ENCODE measurements at regions of chr2 and their contacts with region 1.

Region 1: DNA sequence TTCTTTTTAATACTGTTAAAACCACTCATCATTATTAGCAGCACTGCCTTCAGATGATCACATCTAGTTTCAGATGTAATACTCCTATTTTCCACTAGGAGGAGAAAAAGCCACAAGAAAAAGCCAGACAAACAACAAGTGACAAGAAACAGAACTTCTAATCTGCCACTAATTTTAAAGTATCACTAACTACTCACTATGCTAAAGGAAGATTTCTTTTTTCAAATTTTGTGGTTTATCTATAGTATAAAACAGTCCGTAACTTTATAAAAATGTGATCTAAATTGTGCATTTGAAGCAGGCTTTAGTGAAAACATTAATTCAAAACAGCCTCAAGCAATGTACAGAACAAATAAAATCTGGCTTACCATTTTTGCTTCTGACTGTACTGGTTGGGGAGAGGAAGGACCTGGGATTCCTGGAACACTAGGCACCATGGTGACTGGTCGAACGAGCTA is 56.8 kb downstream of the ATF2 start:
- DNase-seq: peak in 1 of 2 experiments; percentile 49
- H3K4me3 ChIP-seq: no peak overlapping the region
- H3K4me3 Mint-ChIP-seq: no peak overlapping the region
- H3K27ac Mint-ChIP-seq: no peak overlapping the region
- H3K4me1 ChIP-seq: no peaks in the 10 kb centered on the region
- H3K4me1 Mint-ChIP-seq: no peaks in the 10 kb centered on the region
- H3K27me3 ChIP-seq: no peaks in the 10 kb centered on the region
- H3K27me3 Mint-ChIP-seq: no peaks in the 10 kb centered on the region
- CTCF ChIP-seq: peak; percentile 58 to 66

Region 2: DNA sequence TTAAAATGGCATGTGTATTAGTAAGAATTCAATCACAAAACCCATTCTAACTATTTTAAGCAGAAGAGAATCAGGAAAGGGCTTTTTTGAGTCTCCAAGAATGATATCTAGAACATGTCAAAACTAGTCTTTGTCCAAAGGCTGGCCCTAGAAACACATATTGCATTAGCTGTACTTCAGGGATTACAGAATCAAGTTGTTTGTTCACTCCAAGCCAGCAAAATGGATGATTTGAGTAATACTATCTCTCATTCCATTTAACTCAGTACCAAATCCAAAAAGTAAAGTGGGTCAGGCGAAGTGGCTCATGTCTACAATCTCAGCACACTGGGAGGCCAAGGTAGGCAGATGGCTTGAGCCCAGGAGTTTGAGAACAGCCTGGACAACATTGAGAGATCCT is 15.4 kb after region 1 on chr2:
- CTCF ChIA-PET with region 1: no interaction called
- POLR2A ChIA-PET with region 1: no interaction called
- intact Hi-C with region 1: no loop called
- DNase-seq: no peak
- H3K4me3 ChIP-seq: no peak overlapping the region
- H3K4me3 Mint-ChIP-seq: no peak overlapping the region
- H3K27ac Mint-ChIP-seq: no peak overlapping the region
- H3K4me1 ChIP-seq: no peaks in the 10 kb centered on the region
- H3K4me1 Mint-ChIP-seq: no peaks in the 10 kb centered on the region
- H3K27me3 ChIP-seq: no peaks in the 10 kb centered on the region
- H3K27me3 Mint-ChIP-seq: no peaks in the 10 kb centered on the region
- CTCF ChIP-seq: no peak

Region 3: DNA sequence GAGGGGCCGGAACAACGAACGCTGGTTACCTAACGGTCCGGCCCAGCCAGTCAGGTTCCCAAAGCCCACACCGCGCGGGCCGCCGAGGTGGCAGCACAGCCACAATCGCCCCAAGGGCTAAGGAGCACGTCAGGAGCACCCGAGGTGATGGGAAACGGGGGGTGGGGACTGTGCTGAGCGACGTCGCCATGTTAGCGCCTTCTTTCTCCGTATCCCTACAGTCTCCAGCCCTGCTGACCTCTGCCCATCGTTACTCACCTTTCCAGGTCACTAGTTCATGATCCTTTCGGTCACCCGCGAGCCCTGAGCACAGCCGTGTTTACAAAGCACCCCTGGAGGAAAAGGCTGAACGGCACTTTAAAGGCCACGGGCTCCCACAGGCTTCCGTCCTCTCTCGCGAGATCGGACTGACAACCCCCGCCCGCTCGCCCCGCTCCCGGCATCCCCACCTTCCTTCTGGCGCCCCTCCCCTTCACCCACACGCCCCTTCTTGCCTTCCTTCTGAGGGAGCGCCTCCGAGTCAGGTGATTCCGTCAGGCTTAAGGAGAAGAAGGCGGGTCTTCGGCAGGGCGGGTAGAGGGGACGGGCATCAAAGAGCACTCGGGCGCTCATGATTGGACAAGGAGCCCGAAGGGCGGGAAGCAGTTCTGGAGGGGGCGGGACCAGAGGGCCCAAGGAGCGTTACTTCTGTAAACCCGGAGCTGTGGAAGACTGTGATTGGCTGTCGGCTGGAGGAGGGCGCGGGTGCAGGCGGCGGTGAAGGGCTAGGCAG is 56.7 kb after region 1 on chr2 and contains the start of gene ATF2:
- CTCF ChIA-PET with region 1: no interaction called
- POLR2A ChIA-PET with region 1: no interaction called
- intact Hi-C with region 1: loop called (anchors 2 kb)
- DNase-seq: peak; percentile 99 to 100
- H3K4me3 ChIP-seq: peak within 1 kb of the TSS; percentile 75
- H3K4me3 Mint-ChIP-seq: peak within 1 kb of the TSS; percentile 98
- H3K27ac Mint-ChIP-seq: peak within 1 kb of the TSS; percentile 99
- H3K4me1 ChIP-seq: peaks cover 10% of the 10 kb centered on the region
- H3K4me1 Mint-ChIP-seq: no peaks in the 10 kb centered on the region
- H3K27me3 ChIP-seq: no peaks in the 10 kb centered on the region
- H3K27me3 Mint-ChIP-seq: no peaks in the 10 kb centered on the region
- CTCF ChIP-seq: no peak
- total RNA-seq, gene ATF2: 44.0 and 47.1 TPM in 2 replicates

Region 4: GRCh38 chr2:175187378-175187777 is 76.1 kb after region 1 on chr2:
- CTCF ChIA-PET with region 1: no interaction called
- POLR2A ChIA-PET with region 1: no interaction called
- intact Hi-C with region 1: loop called (anchors 1 kb)
- DNase-seq: peak; percentile 45 to 59
- H3K4me3 ChIP-seq: no peak overlapping the region
- H3K4me3 Mint-ChIP-seq: no peak overlapping the region
- H3K27ac Mint-ChIP-seq: no peak overlapping the region
- H3K4me1 ChIP-seq: no peaks in the 10 kb centered on the region
- H3K4me1 Mint-ChIP-seq: no peaks in the 10 kb centered on the region
- H3K27me3 ChIP-seq: no peaks in the 10 kb centered on the region
- H3K27me3 Mint-ChIP-seq: no peaks in the 10 kb centered on the region
- CTCF ChIP-seq: peak; percentile 16 to 64

Region 5: GRCh38 chr2:175490360-175490791 is 379.1 kb after region 1 on chr2:
- CTCF ChIA-PET with region 1: no interaction called
- POLR2A ChIA-PET with region 1: no interaction called
- intact Hi-C with region 1: no loop called
- DNase-seq: no peak
- H3K4me3 ChIP-seq: no peak overlapping the region
- H3K4me3 Mint-ChIP-seq: no peak overlapping the region
- H3K27ac Mint-ChIP-seq: no peak overlapping the region
- H3K4me1 ChIP-seq: no peaks in the 10 kb centered on the region
- H3K4me1 Mint-ChIP-seq: no peaks in the 10 kb centered on the region
- H3K27me3 ChIP-seq: no peaks in the 10 kb centered on the region
- H3K27me3 Mint-ChIP-seq: no peaks in the 10 kb centered on the region
- CTCF ChIP-seq: no peak

Measured in Caco-2 (cell line).